ENCODE measurements at regions of chr1 and their contacts with region 1.

Region 1: DNA sequence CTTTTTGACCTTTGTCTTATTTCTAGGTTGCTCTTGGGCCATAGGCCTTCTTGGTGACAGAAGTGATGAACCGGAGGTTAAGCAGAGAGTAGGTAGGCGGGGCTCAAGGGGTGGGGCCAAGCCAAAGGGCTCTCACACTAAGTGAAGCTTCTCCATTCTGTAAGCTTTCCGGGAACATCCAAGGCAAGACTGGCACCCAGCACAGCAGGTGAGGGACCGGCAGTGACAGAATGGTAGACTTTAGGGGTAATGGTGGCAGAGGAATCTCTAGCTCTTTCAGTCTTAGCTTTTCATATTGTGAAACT is at the start of gene TNFAIP8L2:
- DNase-seq: no peak
- H3K4me3 Mint-ChIP-seq: no peak within 1 kb of the TSS
- H3K27ac Mint-ChIP-seq: no peak within 1 kb of the TSS
- H3K4me1 Mint-ChIP-seq: peaks cover 12% of the 10 kb centered on the region
- H3K27me3 Mint-ChIP-seq: no peaks in the 10 kb centered on the region
- CTCF ChIP-seq: no peak
- total RNA-seq, gene TNFAIP8L2: not detected in 2 replicates

Region 2: DNA sequence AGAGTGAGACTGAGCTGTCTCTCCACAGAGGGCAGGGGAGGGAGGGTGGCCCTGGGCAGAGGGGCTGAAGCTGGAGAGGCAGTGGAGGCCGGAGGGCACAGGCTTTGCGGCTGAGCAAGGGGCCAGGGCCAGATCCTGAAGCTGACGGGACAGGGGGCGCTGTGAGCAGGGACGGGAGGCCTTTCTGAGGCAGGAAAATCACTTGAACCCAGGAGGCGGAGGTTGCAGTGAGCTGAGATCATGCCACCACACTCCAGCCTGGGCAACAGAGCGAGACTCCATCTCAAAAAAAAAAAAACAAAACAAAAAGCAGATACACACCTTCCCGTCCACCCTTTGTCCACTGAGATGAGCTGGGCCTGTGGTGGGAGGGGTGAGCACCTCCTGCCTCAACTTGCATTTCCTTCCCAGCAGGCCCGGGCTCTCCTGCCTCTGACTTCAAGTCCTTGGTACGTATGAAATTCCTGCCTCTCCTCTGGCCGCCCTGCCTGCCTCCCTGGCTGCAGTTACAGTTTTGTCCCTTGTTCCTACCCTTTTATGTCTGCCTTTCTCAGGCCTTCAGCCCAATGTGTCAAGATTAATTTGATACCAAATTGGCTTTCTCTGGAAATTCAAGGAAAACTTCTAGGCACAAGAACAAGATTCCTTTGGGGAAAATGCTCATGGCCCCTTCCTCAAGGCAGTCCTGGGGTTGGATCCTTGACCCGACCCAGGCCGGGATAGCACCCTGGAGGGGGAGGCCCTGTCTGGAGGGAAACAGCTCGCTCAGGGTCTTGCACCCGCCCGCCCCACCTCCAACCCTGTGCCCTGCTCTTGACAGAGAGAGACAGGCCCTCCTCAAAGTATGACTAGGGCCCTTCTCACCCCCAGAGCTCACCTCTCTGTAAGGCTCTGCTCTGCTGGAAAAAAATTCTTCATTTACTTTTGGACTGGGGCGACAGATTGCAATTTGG is 618.5 kb before region 1 on chr1:
- CTCF ChIA-PET with region 1: no interaction called
- POLR2A ChIA-PET with region 1: no interaction called
- intact Hi-C with region 1: no loop called
- DNase-seq: no peak
- H3K4me3 Mint-ChIP-seq: no peak overlapping the region
- H3K27ac Mint-ChIP-seq: no peak overlapping the region
- H3K4me1 Mint-ChIP-seq: peaks cover 6% of the 10 kb centered on the region
- H3K27me3 Mint-ChIP-seq: no peaks in the 10 kb centered on the region
- CTCF ChIP-seq: no peak

Region 3: DNA sequence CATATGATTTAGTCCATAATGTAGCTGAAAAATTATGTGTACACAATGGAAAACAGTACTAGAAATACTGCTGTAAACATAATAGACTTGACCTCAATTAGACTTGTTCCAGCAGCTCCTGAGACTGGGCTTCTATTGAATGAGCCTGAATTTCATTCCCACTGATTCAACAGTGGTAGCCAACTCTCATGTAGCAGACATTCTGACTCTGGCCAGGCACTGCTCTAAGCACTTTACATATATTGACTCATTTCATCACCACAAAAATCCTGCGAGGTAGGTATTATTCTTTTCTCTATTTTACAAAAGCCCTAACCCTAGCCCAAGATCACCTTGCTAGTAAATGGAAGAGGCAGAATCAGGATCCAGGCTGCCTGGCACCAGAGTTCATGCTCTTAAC is 378.1 kb before region 1 on chr1:
- CTCF ChIA-PET with region 1: no interaction called
- POLR2A ChIA-PET with region 1: no interaction called
- intact Hi-C with region 1: no loop called
- DNase-seq: no peak
- H3K4me3 Mint-ChIP-seq: no peak overlapping the region
- H3K27ac Mint-ChIP-seq: no peak overlapping the region
- H3K4me1 Mint-ChIP-seq: no peaks in the 10 kb centered on the region
- H3K27me3 Mint-ChIP-seq: no peaks in the 10 kb centered on the region
- CTCF ChIP-seq: no peak

Region 4: DNA sequence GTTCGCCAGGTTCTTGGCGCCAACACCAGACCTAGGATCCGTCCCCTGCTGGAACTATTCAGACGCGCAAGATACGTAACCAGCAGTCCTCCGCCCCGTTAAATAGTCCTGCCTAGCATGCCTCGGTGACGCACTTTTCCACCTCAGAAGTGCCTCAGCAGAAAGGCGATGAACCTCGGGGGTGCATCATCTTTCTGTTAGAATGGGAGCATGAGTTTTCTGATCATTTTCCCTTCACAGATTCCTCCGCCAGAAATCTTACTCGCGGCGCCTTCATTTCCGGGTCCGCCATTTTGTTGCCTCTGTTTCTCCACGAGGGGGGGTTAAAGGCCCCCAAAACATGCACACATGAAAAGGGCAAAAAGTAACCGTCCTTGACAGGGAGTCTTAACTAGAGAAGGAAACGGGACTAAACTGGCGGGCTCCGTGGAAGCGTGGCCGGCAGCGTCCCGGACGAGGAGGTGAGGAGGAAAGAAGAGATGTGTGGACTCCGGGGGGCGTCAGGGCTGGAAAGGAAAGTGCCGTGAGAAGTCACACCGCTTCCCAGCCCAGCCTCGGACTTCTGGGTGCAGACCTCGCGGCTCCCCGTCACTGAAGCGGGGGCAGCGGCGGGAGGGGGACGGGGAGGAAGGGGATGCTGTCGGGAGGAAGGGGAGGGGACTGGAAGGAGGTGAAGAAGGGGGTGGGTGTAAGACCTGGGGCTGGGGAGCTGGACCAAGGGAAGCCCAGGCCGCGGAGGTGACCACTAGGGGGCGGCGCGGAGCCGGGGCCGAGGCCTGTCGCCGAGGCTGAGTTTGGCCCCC is 85.8 kb before region 1 on chr1 and contains the start of gene GABPB2:
- CTCF ChIA-PET with region 1: interaction called, 22 read pairs
- POLR2A ChIA-PET with region 1: interaction called, 7 read pairs
- intact Hi-C with region 1: loop called (anchors 1 kb)
- DNase-seq: peak; percentile 98
- H3K4me3 Mint-ChIP-seq: peak within 1 kb of the TSS; percentile 100
- H3K27ac Mint-ChIP-seq: peak within 1 kb of the TSS; percentile 100
- H3K4me1 Mint-ChIP-seq: no peaks in the 10 kb centered on the region
- H3K27me3 Mint-ChIP-seq: no peaks in the 10 kb centered on the region
- CTCF ChIP-seq: peak; percentile 99
- total RNA-seq, gene GABPB2: 20.2 and 22.9 TPM in 2 replicates

Region 5: GRCh38 chr1:151085953-151086559 is 70.4 kb before region 1 on chr1:
- CTCF ChIA-PET with region 1: interaction called, 12 read pairs
- POLR2A ChIA-PET with region 1: no interaction called
- intact Hi-C with region 1: no loop called
- DNase-seq: no peak
- H3K4me3 Mint-ChIP-seq: no peak overlapping the region
- H3K27ac Mint-ChIP-seq: no peak overlapping the region
- H3K4me1 Mint-ChIP-seq: no peaks in the 10 kb centered on the region
- H3K27me3 Mint-ChIP-seq: no peaks in the 10 kb centered on the region
- CTCF ChIP-seq: no peak

Region 6: GRCh38 chr1:151189638-151190445 is 33.4 kb after region 1 on chr1 and contains the start of gene VPS72:
- CTCF ChIA-PET with region 1: interaction called, 10 read pairs
- POLR2A ChIA-PET with region 1: interaction called, 4 read pairs
- intact Hi-C with region 1: no loop called
- DNase-seq: peak; percentile 93
- H3K4me3 Mint-ChIP-seq: peak within 1 kb of the TSS; percentile 83
- H3K27ac Mint-ChIP-seq: peak within 1 kb of the TSS; percentile 90
- H3K4me1 Mint-ChIP-seq: peaks cover 33% of the 10 kb centered on the region
- H3K27me3 Mint-ChIP-seq: no peaks in the 10 kb centered on the region
- CTCF ChIP-seq: no peak
- total RNA-seq, gene VPS72: 106 and 108 TPM in 2 replicates

Region 7: GRCh38 chr1:151238467-151238739 is 81.9 kb after region 1 on chr1:
- CTCF ChIA-PET with region 1: no interaction called
- POLR2A ChIA-PET with region 1: no interaction called
- intact Hi-C with region 1: no loop called
- DNase-seq: peak; percentile 68
- H3K4me3 Mint-ChIP-seq: no peak overlapping the region
- H3K27ac Mint-ChIP-seq: peak overlapping the region; percentile 29
- H3K4me1 Mint-ChIP-seq: peaks cover 12% of the 10 kb centered on the region
- H3K27me3 Mint-ChIP-seq: no peaks in the 10 kb centered on the region
- CTCF ChIP-seq: no peak

Region 8: GRCh38 chr1:151327223-151327902 is 170.9 kb after region 1 on chr1 and contains the start of gene PI4KB:
- CTCF ChIA-PET with region 1: no interaction called
- POLR2A ChIA-PET with region 1: no interaction called
- intact Hi-C with region 1: no loop called
- DNase-seq: peak; percentile 100
- H3K4me3 Mint-ChIP-seq: peak within 1 kb of the TSS; percentile 89
- H3K27ac Mint-ChIP-seq: peak within 1 kb of the TSS; percentile 90
- H3K4me1 Mint-ChIP-seq: peaks cover 36% of the 10 kb centered on the region
- H3K27me3 Mint-ChIP-seq: no peaks in the 10 kb centered on the region
- CTCF ChIP-seq: no peak
- total RNA-seq, gene PI4KB: 75.3 and 90.1 TPM in 2 replicates

Measured in MCF 10A (cell line).